ENCODE measurements at regions of chr15 and their contacts with region 1.

Region 1: GRCh38 chr15:49620658-49621368 is at the starts of genes DTWD1 and FAM227B:
- DNase-seq: peak; percentile 85 to 94 (median 93)
- ATAC-seq: peak; percentile 99
- H3K4me3 ChIP-seq: peak within 1 kb of the TSS; percentile 78
- H3K4me3 Mint-ChIP-seq: peak within 1 kb of the TSS; percentile 85 to 99 (median 96)
- H3K27ac ChIP-seq: peak within 1 kb of the TSS; percentile 88
- H3K27ac Mint-ChIP-seq: peak within 1 kb of the TSS; percentile 93 to 99 (median 98)
- H3K4me1 ChIP-seq: peaks cover 17% of the 10 kb centered on the region in 2 donors
- H3K4me1 Mint-ChIP-seq: peaks cover 19 to 63% (median 48%) of the 10 kb centered on the region in 7 donors
- H3K27me3 ChIP-seq: no peaks in the 10 kb centered on the region
- H3K27me3 Mint-ChIP-seq: no peaks in the 10 kb centered on the region
- total RNA-seq, gene DTWD1: 14.3 to 31.0 (median 20.1) TPM
- total RNA-seq, gene FAM227B: 3.7 to 16.5 (median 8.2) TPM

Region 2: GRCh38 chr15:48177766-48178647 is 1442.8 kb before region 1 on chr15 and contains the start of gene MYEF2:
- CTCF ChIA-PET with region 1: no interaction called
- POLR2A ChIA-PET with region 1: no interaction called
- intact Hi-C with region 1: loop called in 1 of 2 experiments (anchors 5 kb)
- DNase-seq: peak; percentile 35 to 70 (median 60)
- ATAC-seq: peak; percentile 80
- H3K4me3 ChIP-seq: peak within 1 kb of the TSS; percentile 68
- H3K4me3 Mint-ChIP-seq: peak within 1 kb of the TSS; percentile 89 to 96 (median 92)
- H3K27ac ChIP-seq: peak within 1 kb of the TSS; percentile 65
- H3K27ac Mint-ChIP-seq: peak within 1 kb of the TSS; percentile 63 to 96 (median 87)
- H3K4me1 ChIP-seq: no peaks in the 10 kb centered on the region
- H3K4me1 Mint-ChIP-seq: peaks cover 8 to 35% (median 16%) of the 10 kb centered on the region in 7 donors
- H3K27me3 ChIP-seq: no peaks in the 10 kb centered on the region
- H3K27me3 Mint-ChIP-seq: peaks cover 20 to 28% (median 23%) of the 10 kb centered on the region in 5 donors
- total RNA-seq, gene MYEF2: 16.4 to 29.1 (median 17.8) TPM

Region 3: DNA sequence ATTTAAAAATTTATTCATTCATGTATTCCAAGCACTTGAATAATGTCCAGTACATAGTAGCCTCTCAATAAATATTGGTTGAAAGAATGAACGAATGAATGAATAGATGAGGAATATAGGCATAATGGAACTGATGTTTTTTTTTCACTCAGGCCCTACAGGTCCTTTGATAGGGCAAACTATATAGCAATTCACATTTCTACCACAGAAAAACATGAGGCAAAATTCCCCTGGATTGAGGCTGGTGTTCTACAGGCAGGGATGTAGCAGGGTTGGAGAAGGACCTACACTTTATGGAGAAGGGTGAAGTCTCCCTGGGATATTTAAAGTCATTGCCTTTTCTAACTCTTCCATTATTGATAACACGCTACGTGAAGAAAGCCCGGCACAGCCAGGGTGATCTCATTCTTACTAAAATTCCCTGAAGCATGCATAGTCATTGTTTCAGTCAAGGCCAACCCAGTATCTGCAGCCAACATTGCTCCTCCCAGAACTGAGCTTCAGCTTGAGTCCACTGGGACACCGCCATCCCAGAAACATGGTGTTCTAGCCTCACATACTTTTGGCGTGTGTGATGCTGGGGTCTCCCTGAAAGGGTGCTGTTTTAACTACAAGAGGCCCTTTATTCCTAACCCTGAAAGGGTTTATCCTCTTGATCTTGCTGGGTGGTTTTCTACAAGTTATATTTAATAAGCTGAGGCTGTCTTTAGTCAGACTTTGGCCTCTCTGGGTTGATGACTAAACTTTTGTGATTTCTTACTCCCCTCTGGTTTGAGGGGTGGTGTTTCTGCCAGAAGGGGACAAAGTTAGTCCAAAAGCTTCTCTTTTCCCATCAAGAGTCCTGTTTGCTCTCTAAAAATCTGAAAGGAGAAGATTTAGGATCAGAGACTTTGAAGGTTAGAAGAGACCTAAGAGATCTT is 949.5 kb before region 1 on chr15:
- CTCF ChIA-PET with region 1: no interaction called
- POLR2A ChIA-PET with region 1: no interaction called
- intact Hi-C with region 1: no loop called
- DNase-seq: no peak
- ATAC-seq: no peak
- H3K4me3 ChIP-seq: no peak overlapping the region
- H3K4me3 Mint-ChIP-seq: no peak overlapping the region
- H3K27ac ChIP-seq: no peak overlapping the region
- H3K27ac Mint-ChIP-seq: no peak overlapping the region
- H3K4me1 ChIP-seq: no peaks in the 10 kb centered on the region
- H3K4me1 Mint-ChIP-seq: no peaks in the 10 kb centered on the region
- H3K27me3 ChIP-seq: no peaks in the 10 kb centered on the region
- H3K27me3 Mint-ChIP-seq: peaks cover 0 to 24% (median 0%) of the 10 kb centered on the region in 5 donors

Region 4: DNA sequence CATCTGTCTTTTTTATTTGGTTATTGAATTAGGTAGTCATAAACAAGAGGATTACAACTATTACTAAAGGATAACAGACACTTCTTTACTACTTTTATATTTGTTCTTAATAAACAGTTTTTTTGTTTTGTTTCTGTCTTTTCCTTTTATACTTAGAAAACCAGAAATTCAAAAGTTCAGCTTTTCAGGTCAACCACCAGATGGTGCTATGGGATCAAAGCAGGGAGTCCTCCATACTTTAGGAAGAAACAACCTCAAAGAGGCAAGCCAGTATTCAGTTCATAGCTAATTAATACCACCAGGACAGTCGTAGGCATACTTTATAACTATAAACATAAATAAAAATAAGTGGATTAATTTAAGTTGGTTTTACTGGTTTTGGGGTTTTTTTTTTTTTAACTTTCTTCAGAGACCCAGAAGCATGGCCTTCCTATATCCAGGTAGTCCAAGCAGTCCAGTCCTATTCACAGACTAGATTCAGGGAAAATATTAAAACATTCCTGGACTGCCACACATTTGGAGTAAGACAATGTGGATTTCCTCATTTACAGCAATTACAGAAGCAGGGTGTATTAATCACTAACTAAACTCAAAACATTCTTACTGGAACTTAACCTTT is 758.9 kb before region 1 on chr15:
- CTCF ChIA-PET with region 1: no interaction called
- POLR2A ChIA-PET with region 1: interaction called, 3 read pairs
- intact Hi-C with region 1: loop called in 1 of 2 experiments (anchors 5 kb)
- DNase-seq: peak in 7 of 9 donors; percentile 45 to 75 (median 66)
- ATAC-seq: peak; percentile 80
- H3K4me3 ChIP-seq: no peak overlapping the region
- H3K4me3 Mint-ChIP-seq: no peak overlapping the region
- H3K27ac ChIP-seq: no peak overlapping the region
- H3K27ac Mint-ChIP-seq: no peak overlapping the region
- H3K4me1 ChIP-seq: no peaks in the 10 kb centered on the region
- H3K4me1 Mint-ChIP-seq: peaks cover 0 to 13% (median 3%) of the 10 kb centered on the region in 7 donors
- H3K27me3 ChIP-seq: no peaks in the 10 kb centered on the region
- H3K27me3 Mint-ChIP-seq: peaks cover 2 to 21% (median 7%) of the 10 kb centered on the region in 5 donors

Region 5: GRCh38 chr15:49060710-49061505 is 559.9 kb before region 1 on chr15:
- CTCF ChIA-PET with region 1: no interaction called
- POLR2A ChIA-PET with region 1: no interaction called
- intact Hi-C with region 1: loop called in 1 of 2 experiments (anchors 5 kb)
- DNase-seq: peak in 2 of 9 donors; percentile 25 to 35
- ATAC-seq: no peak
- H3K4me3 ChIP-seq: no peak overlapping the region
- H3K4me3 Mint-ChIP-seq: peak overlapping the region in 9 of 10 donors; percentile 13 to 82 (median 71)
- H3K27ac ChIP-seq: peak overlapping the region; percentile 53
- H3K27ac Mint-ChIP-seq: peak overlapping the region; percentile 4 to 97 (median 94)
- H3K4me1 ChIP-seq: peaks cover 0 to 50% of the 10 kb centered on the region in 2 donors
- H3K4me1 Mint-ChIP-seq: peaks cover 4 to 30% (median 21%) of the 10 kb centered on the region in 7 donors
- H3K27me3 ChIP-seq: no peaks in the 10 kb centered on the region
- H3K27me3 Mint-ChIP-seq: peaks cover 0 to 5% (median 0%) of the 10 kb centered on the region in 5 donors

Region 6: GRCh38 chr15:49235446-49236124 is 385.2 kb before region 1 on chr15:
- CTCF ChIA-PET with region 1: no interaction called
- POLR2A ChIA-PET with region 1: no interaction called
- intact Hi-C with region 1: loop called in 1 of 2 experiments (anchors 1 kb)
- DNase-seq: peak in 7 of 9 donors; percentile 13 to 51 (median 44)
- ATAC-seq: peak; percentile 87
- H3K4me3 ChIP-seq: no peak overlapping the region
- H3K4me3 Mint-ChIP-seq: no peak overlapping the region
- H3K27ac ChIP-seq: no peak overlapping the region
- H3K27ac Mint-ChIP-seq: peak overlapping the region in 4 of 9 donors; percentile 6 to 67 (median 41)
- H3K4me1 ChIP-seq: no peaks in the 10 kb centered on the region
- H3K4me1 Mint-ChIP-seq: peaks cover 0 to 24% (median 13%) of the 10 kb centered on the region in 7 donors
- H3K27me3 ChIP-seq: no peaks in the 10 kb centered on the region
- H3K27me3 Mint-ChIP-seq: no peaks in the 10 kb centered on the region

Region 7: GRCh38 chr15:50009634-50010033 is 388.8 kb after region 1 on chr15:
- CTCF ChIA-PET with region 1: no interaction called
- POLR2A ChIA-PET with region 1: no interaction called
- intact Hi-C with region 1: no loop called
- DNase-seq: no peak
- ATAC-seq: no peak
- H3K4me3 ChIP-seq: no peak overlapping the region
- H3K4me3 Mint-ChIP-seq: no peak overlapping the region
- H3K27ac ChIP-seq: no peak overlapping the region
- H3K27ac Mint-ChIP-seq: no peak overlapping the region
- H3K4me1 ChIP-seq: no peaks in the 10 kb centered on the region
- H3K4me1 Mint-ChIP-seq: no peaks in the 10 kb centered on the region
- H3K27me3 ChIP-seq: no peaks in the 10 kb centered on the region
- H3K27me3 Mint-ChIP-seq: peaks cover 0 to 15% (median 6%) of the 10 kb centered on the region in 5 donors

Region 8: DNA sequence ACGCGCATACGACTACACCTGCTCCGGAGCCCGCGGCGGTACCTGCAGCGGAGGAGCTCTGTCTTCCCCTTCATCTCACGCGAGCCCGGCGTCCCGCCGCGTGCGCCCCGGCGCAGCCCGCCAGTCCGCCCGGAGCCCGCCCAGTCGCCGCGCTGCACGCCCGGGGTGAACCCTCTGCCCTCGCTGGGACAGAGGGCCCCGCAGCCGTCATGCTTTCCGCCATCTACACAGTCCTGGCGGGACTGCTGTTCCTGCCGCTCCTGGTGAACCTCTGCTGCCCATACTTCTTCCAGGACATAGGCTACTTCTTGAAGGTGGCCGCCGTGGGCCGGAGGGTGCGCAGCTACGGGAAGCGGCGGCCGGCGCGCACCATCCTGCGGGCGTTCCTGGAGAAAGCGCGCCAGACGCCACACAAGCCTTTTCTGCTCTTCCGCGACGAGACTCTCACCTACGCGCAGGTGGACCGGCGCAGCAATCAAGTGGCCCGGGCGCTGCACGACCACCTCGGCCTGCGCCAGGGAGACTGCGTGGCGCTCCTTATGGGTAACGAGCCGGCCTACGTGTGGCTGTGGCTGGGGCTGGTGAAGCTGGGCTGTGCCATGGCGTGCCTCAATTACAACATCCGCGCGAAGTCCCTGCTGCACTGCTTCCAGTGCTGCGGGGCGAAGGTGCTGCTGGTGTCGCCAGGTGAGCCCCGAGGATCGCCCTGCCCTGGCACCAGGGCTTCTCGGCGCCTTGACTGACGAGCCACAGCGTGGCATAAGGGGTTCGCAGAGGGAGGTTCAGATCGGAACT is 561.6 kb after region 1 on chr15:
- CTCF ChIA-PET with region 1: no interaction called
- POLR2A ChIA-PET with region 1: no interaction called
- intact Hi-C with region 1: loop called in 1 of 2 experiments (anchors 1 kb)
- DNase-seq: peak in 6 of 9 donors; percentile 13 to 65 (median 21)
- ATAC-seq: peak; percentile 56
- H3K4me3 ChIP-seq: peak overlapping the region; percentile 67
- H3K4me3 Mint-ChIP-seq: peak overlapping the region; percentile 82 to 98 (median 90)
- H3K27ac ChIP-seq: no peak overlapping the region
- H3K27ac Mint-ChIP-seq: peak overlapping the region in 3 of 9 donors; percentile 39 to 85 (median 54)
- H3K4me1 ChIP-seq: peaks cover 0 to 6% of the 10 kb centered on the region in 2 donors
- H3K4me1 Mint-ChIP-seq: peaks cover 7 to 56% (median 12%) of the 10 kb centered on the region in 7 donors
- H3K27me3 ChIP-seq: no peaks in the 10 kb centered on the region
- H3K27me3 Mint-ChIP-seq: peaks cover 0 to 53% (median 38%) of the 10 kb centered on the region in 5 donors

Region 9: GRCh38 chr15:50686468-50687301 is 1065.9 kb after region 1 on chr15 and contains the start of gene TRPM7:
- CTCF ChIA-PET with region 1: no interaction called
- POLR2A ChIA-PET with region 1: no interaction called
- intact Hi-C with region 1: loop called in 1 of 2 experiments (anchors 1 kb)
- DNase-seq: peak; percentile 83 to 93 (median 90)
- ATAC-seq: peak; percentile 91
- H3K4me3 ChIP-seq: peak within 1 kb of the TSS; percentile 99
- H3K4me3 Mint-ChIP-seq: peak within 1 kb of the TSS; percentile 86 to 100 (median 97)
- H3K27ac ChIP-seq: peak within 1 kb of the TSS; percentile 93
- H3K27ac Mint-ChIP-seq: peak within 1 kb of the TSS; percentile 91 to 99 (median 97)
- H3K4me1 ChIP-seq: peaks cover 16 to 26% of the 10 kb centered on the region in 2 donors
- H3K4me1 Mint-ChIP-seq: peaks cover 42 to 62% (median 51%) of the 10 kb centered on the region in 7 donors
- H3K27me3 ChIP-seq: no peaks in the 10 kb centered on the region
- H3K27me3 Mint-ChIP-seq: no peaks in the 10 kb centered on the region
- total RNA-seq, gene TRPM7: 36.1 to 62.3 (median 45.2) TPM